K562 (cell line): ENCODE measurements at regions of chr1 and their contacts with region 1.

Region 1: GRCh38 chr1:19596714-19597495 is 47.2 kb upstream of the NBL1 start:
- DNase-seq: peak; percentile 97 to 100 (median 98)
- ATAC-seq: peak; percentile 95
- H3K4me3 ChIP-seq: peak overlapping the region; percentile 78
- H3K27ac ChIP-seq: peak overlapping the region; percentile 93
- H3K4me1 ChIP-seq: peaks cover 13 to 34% of the 10 kb centered on the region in 2 experiments
- H3K27me3 ChIP-seq: no peaks in the 10 kb centered on the region
- CTCF ChIP-seq: peak in 1 of 3 experiments; percentile 36; a peak in 2 of 6 replicates
- EP300 ChIP-seq: peak; percentile 47; the same call in 1 of the 2 replicates
- POLR2A ChIP-seq: peak; percentile 97
- RAD21 ChIP-seq: no peak

Region 2: GRCh38 chr1:19610282-19610978 is 13.5 kb after region 1 on chr1:
- CTCF ChIA-PET with region 1: no interaction called
- POLR2A ChIA-PET with region 1: interaction called, 17 read pairs
- in situ Hi-C with region 1: no loop called
- intact Hi-C with region 1: no loop called
- DNase-seq: no peak
- ATAC-seq: no peak
- H3K4me3 ChIP-seq: no peak overlapping the region
- H3K27ac ChIP-seq: no peak overlapping the region
- H3K4me1 ChIP-seq: peaks cover 3 to 5% of the 10 kb centered on the region in 2 experiments; a peak in 2 of 5 replicates
- H3K27me3 ChIP-seq: no peaks in the 10 kb centered on the region
- CTCF ChIP-seq: no peak
- EP300 ChIP-seq: no peak
- POLR2A ChIP-seq: no peak
- RAD21 ChIP-seq: no peak